WTC11 (cell line): ENCODE measurements at regions of chr9 and their contacts with region 1.

Region 1: DNA sequence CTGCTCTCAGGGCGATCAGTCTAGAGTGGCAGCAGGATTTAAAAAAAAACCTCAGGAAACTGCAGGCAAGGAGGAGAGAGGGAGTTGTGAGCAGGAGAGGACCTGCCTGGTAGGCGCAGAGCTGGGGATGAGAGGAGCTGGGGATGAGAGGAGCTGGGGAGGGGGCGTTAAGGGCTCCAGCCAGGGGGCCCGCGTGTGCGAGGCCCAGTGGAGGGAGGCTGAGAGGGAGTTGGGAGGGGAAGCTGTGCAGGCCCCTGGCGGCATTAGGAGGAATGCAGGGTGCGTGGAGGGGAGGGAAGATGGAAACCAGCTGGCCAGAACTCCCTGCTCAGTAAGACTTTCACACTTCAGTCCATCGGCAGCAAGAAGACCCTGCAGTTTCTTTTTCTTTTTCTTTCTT is 45.2 kb upstream of the HMCN2 start:
- DNase-seq: no peak
- ATAC-seq: peak; percentile 68
- H3K4me3 Mint-ChIP-seq: no peak overlapping the region
- H3K27ac Mint-ChIP-seq: peak overlapping the region; percentile 25; the same call in 1 of the 2 replicates
- H3K4me1 Mint-ChIP-seq: peaks cover 2% of the 10 kb centered on the region; the same call in 1 of the 2 replicates
- H3K27me3 Mint-ChIP-seq: no peaks in the 10 kb centered on the region
- CTCF ChIP-seq: no peak

Region 2: GRCh38 chr9:130165579-130165978 is 54.8 kb before region 1 on chr9:
- CTCF ChIA-PET with region 1: no interaction called
- POLR2A ChIA-PET with region 1: no interaction called
- DNase-seq: no peak
- ATAC-seq: no peak
- H3K4me3 Mint-ChIP-seq: no peak overlapping the region
- H3K27ac Mint-ChIP-seq: no peak overlapping the region
- H3K4me1 Mint-ChIP-seq: 0 out of 2 replicates have a peak, but pooled peaks cover 4% of the 10 kb centered on the region
- H3K27me3 Mint-ChIP-seq: peaks cover under 1% of the 10 kb centered on the region; the same call in 1 of the 2 replicates
- CTCF ChIP-seq: no peak

Region 3: GRCh38 chr9:130186839-130187522 is 33.4 kb before region 1 on chr9:
- CTCF ChIA-PET with region 1: interaction called, 17 read pairs
- POLR2A ChIA-PET with region 1: no interaction called
- DNase-seq: peak; percentile 65
- ATAC-seq: peak; percentile 85
- H3K4me3 Mint-ChIP-seq: 0 out of 2 replicates have a peak overlapping the region, but pooled peaks have one; percentile 8
- H3K27ac Mint-ChIP-seq: peak overlapping the region; percentile 52
- H3K4me1 Mint-ChIP-seq: peaks cover 31% of the 10 kb centered on the region
- H3K27me3 Mint-ChIP-seq: no peaks in the 10 kb centered on the region
- CTCF ChIP-seq: no peak